Colonic mucosa (tissue), 4 donors: ENCODE measurements at regions of chr14 and their contacts with region 1.

Region 1: GRCh38 chr14:35229495-35230089 is 62.6 kb upstream of the PSMA6 start:
- DNase-seq: no peak
- H3K4me3 ChIP-seq: no peak overlapping the region
- H3K27ac ChIP-seq: no peak overlapping the region
- H3K4me1 ChIP-seq: no peaks in the 10 kb centered on the region
- H3K27me3 ChIP-seq: no peaks in the 10 kb centered on the region
- CTCF ChIP-seq: peak; percentile 13

Region 2: GRCh38 chr14:35414365-35414764 is 184.8 kb after region 1 on chr14:
- intact Hi-C with region 1: loop called (anchors 5 kb)
- DNase-seq: no peak
- H3K4me3 ChIP-seq: no peak overlapping the region
- H3K27ac ChIP-seq: no peak overlapping the region
- H3K4me1 ChIP-seq: no peaks in the 10 kb centered on the region
- H3K27me3 ChIP-seq: no peaks in the 10 kb centered on the region
- CTCF ChIP-seq: no peak